ENCODE measurements at regions of chr10 and their contacts with region 1.

Region 1: GRCh38 chr10:72173635-72174296 is 42.0 kb upstream of the ANAPC16 start:
- DNase-seq: peak; percentile 42
- ATAC-seq: no peak; the same call in 2 of the 3 replicates
- H3K4me3 ChIP-seq: no peak overlapping the region
- H3K27ac ChIP-seq: no peak overlapping the region
- H3K4me1 ChIP-seq: peaks cover 32% of the 10 kb centered on the region
- H3K27me3 ChIP-seq: no peaks in the 10 kb centered on the region
- CTCF ChIP-seq: no peak
- EP300 ChIP-seq: no peak
- POLR2A ChIP-seq: no peak
- RAD21 ChIP-seq: no peak

Region 2: DNA sequence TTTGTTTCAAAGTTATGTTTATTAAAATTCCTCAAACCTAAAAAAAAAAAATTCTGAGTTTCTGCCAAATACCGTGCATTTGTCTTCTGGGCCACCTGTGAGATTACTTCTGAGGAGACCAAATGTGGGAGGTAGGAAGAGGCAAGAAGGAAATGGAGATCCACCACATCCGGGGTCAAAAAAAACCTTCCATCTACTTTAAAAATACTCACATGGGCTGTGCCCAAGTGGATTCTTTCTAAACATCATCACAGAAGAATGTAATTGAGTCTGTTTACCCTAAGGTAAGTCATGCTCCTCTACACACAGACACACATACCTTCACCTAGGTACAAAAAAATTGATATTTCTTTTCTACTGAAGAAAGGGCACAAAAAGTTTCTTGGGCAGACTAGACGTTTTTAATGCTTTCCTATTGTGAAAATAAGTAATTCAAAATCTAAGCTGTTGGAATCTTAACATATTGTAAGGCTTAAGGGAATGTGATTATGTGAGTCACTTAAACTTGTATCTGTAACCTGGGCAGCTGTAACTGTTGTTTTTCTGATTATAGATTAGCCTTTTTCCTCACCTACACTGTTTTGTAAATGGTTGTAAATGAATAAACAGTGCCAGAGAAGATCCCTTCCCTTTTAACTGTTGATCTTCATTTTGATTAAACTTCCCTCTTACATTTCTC is 66.3 kb before region 1 on chr10:
- CTCF ChIA-PET with region 1: no interaction called
- POLR2A ChIA-PET with region 1: no interaction called
- in situ Hi-C with region 1: no loop called
- intact Hi-C with region 1: loop called (anchors 10 kb)
- DNase-seq: no peak
- ATAC-seq: no peak
- H3K4me3 ChIP-seq: no peak overlapping the region
- H3K27ac ChIP-seq: no peak overlapping the region
- H3K4me1 ChIP-seq: peaks cover 52% of the 10 kb centered on the region
- H3K27me3 ChIP-seq: no peaks in the 10 kb centered on the region
- CTCF ChIP-seq: no peak
- EP300 ChIP-seq: no peak
- POLR2A ChIP-seq: no peak
- RAD21 ChIP-seq: no peak

Measured in HepG2 (cell line).